ENCODE measurements at regions of chr4 and their contacts with region 1.

Region 1: DNA sequence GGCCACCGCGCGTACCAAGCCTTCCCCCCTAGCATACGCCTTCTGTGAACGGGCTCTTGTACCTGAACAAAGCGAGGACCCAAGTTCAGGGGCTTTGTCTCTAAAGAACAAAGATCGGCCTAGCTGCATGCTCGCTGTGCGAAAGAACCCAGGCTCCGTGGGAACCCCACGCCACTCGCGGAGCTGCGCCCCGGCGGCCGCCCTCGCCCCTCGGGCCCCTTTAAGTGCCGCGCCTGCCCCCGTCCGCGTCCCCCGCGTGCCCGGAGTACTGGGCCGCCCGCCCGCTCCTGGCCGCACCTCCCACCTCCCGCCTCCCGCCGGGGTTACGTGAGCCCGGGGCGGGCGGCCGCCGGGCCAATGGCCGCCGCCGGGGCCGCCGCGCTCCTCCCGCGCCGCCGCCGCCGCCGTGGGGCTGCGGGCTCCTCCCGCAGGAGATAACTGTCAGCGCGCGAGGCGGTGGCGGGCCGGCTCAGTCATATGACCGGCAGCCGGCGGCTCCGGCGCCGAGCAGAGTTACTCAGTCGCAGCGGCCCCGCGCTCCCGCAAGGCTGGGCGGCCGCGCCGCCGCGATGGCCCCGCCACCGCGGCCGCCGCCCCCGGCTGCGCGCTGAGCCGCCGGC is at the start of gene FNIP2:
- DNase-seq: peak; percentile 74 to 91 (median 84)
- H3K4me3 ChIP-seq: peak within 1 kb of the TSS; percentile 67 to 98 (median 90)
- H3K27ac ChIP-seq: peak within 1 kb of the TSS; percentile 71 to 98 (median 95)
- H3K27me3 ChIP-seq: no peaks in the 10 kb centered on the region
- CTCF ChIP-seq: peak in 5 of 56 donors; percentile 5 to 23 (median 12)
- total RNA-seq, gene FNIP2: 38.5 to 72.7 (median 57.8) TPM

Region 2: DNA sequence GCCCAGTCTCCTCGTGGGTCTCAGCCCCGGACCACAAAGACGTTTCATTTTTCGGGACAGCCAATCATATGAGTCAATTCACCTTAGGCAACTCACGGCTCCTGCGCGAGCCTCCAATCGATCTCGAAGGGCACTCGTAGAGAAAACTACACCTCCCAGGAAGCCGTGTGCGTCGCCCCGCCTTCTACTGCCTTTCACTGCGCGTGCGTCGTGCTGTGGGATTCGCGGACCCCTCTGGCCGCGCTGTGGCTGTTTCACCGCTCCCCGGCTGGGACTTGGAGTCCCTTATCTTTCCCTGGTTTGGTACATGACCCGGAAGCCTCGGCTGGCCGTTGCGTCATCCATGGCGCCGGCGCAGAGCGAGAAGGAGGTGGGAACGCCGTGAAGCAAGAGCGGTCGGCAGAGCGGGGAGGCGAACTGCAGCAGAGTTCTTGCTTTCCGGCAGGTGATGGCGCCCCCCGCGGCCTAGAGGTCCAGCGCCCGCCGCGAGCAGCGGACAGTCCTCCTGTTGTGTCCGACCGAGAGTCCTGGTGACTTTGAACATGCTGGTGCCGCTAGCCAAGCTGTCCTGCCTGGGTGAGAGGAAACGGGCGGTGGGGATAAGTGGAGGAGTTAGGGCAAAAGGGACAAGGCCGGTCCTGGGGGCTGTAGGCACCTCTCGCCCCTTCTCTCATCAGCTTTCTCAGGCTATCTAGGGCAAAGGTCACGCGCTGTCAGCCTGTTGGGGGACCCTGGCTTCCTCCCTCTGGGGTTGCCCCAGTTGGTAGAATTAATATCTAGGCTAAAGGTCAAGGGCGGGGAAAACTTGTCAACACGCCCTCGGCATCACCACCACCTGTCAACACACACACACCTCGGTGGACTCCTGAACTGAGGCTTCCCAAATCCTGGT is 96.5 kb before region 1 on chr4 and contains the start of gene ETFDH:
- intact Hi-C with region 1: loop called in 1 of 2 experiments (anchors 5 kb)
- DNase-seq: peak; percentile 96 to 99 (median 98)
- H3K4me3 ChIP-seq: peak within 1 kb of the TSS; percentile 62 to 99 (median 89)
- H3K27ac ChIP-seq: peak within 1 kb of the TSS; percentile 59 to 99 (median 95)
- H3K27me3 ChIP-seq: no peaks in the 10 kb centered on the region
- CTCF ChIP-seq: peak; percentile 51 to 93 (median 80)
- total RNA-seq, gene ETFDH: 22.9 to 50.5 (median 35.3) TPM

Region 3: DNA sequence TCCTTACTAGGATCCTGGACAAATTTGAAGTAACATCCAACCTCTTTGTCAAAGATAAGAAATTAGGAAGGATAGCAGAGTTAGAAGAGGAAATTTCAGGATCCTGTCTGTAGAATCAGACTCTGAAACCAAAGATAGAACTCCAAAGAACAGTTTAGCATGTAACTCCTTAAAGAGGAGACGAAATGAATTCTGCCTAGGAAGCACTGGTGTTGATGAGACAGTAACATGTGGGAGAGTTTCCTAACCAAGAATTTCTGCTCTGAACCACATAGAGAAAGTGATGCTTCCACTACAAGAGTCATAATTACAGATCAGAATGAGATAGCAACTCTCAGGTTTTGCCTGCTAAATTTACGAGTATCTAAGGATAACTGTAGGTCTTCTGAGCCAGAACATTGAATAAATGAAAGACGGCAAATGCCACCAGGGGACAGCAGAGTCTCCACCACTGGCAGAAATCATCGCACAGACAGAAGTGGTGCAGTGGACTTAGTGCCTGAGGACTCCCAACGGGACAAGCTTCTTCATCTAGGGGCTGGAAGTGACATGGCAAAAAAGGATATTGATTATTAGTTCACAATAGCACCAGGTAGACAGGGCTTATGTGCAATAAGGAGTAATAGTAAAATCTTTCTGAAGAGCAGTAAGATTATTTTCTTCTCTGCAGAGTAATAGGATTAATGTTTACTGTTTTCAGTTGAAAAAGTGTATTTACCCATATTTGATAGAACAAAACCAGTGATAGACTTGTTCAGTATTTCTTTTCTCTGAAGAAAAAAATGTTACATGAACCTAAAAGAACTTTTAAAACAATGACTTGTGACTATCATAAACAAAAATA is 38.7 kb before region 1 on chr4:
- intact Hi-C with region 1: loop called (anchors 5 kb)
- DNase-seq: peak; percentile 44 to 87 (median 68)
- H3K4me3 ChIP-seq: peak overlapping the region in 1 of 59 donors; percentile 1
- H3K27ac ChIP-seq: peak overlapping the region in 1 of 59 donors; percentile 28
- H3K27me3 ChIP-seq: no peaks in the 10 kb centered on the region
- CTCF ChIP-seq: peak; percentile 66 to 98 (median 91)

Region 4: GRCh38 chr4:158821228-158821971 is 52.7 kb after region 1 on chr4:
- intact Hi-C with region 1: loop called in 1 of 2 experiments (anchors 10 kb)
- DNase-seq: no peak
- H3K4me3 ChIP-seq: no peak overlapping the region
- H3K27ac ChIP-seq: peak overlapping the region in 35 of 59 donors; percentile 1 to 72 (median 45)
- H3K27me3 ChIP-seq: no peaks in the 10 kb centered on the region
- CTCF ChIP-seq: no peak

Region 5: DNA sequence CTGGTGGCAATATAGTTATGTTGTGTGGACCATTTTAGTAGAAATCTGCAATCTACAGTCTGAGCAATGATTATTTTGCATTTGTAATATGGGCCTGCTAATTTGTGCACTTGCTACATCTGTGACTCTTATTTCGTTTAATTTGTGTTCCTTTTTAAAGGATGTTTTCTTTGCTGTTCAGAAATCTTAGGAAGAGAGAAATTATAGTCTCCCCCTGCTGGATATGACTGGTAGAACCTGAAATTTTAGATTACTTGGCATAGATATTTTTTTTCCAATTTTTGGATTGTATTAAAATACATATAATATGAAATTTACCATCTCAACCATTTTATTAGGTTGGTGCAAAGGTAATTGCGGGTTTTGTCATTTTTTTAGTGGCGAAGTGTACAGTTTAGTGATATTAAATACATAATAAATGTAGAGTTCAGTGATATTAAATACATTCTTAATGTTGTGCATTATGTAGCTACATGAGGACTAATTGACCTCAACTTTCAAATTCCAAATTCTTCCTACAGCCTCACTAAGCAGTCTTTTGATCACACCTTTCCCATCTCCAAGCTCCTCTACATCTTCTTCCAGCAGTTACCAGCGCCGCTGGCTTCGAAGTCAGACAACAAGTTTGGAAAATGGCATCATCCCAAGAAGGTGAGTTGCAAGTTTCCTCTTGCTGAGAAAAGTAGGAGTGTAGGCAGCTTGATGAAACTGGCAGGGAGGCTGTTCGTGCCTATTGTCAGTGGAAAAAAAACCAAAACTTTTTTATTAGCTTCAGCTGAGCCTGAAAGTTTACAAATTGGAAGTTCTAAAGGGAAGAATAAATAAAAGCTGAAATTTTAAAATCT is 82.4 kb after region 1 on chr4:
- intact Hi-C with region 1: loop called (anchors 2 to 5 kb)
- DNase-seq: no peak
- H3K4me3 ChIP-seq: no peak overlapping the region
- H3K27ac ChIP-seq: peak overlapping the region in 48 of 59 donors; percentile 0 to 74 (median 45)
- H3K27me3 ChIP-seq: no peaks in the 10 kb centered on the region
- CTCF ChIP-seq: peak; percentile 65 to 96 (median 84)

Region 6: DNA sequence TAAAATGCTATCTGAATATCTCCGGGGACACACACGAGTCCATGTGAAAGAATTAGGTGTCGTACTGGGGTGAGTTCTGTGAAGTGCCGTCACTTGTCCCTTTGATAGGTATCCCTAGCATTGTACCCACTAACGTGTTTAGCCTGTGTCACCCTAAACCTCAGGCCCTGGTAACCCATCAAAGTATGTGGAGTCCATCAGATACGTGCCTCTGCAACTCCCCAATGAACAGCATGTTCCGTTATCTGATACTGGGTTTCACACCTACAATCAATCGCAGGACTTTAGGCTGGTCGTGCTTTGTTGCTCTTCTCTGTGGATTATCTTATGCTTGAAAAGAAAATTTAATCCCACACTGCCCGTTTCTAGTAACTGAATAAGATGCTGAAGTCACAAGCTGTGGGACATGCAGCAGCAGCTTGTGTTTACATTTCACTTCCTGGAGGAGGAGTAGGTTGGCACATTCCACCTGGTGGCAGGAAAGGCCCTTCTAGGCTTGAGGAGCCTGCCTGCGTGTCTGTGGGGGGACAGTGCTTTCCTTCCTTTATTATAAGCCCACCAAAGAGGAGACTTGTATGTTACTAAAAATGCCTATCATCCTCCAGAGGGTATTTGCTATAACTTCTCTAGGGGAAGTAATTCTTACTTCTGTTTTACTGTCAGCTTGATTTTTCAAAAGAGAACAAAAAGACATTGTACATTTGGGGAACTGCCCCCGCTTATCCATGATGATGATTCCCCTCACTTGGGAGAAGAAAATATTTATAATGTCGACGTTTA is 127.3 kb after region 1 on chr4:
- intact Hi-C with region 1: no loop called
- DNase-seq: peak in 4 of 10 donors; percentile 14 to 58 (median 50)
- H3K4me3 ChIP-seq: no peak overlapping the region
- H3K27ac ChIP-seq: peak overlapping the region in 57 of 59 donors; percentile 1 to 83 (median 63)
- H3K27me3 ChIP-seq: no peaks in the 10 kb centered on the region
- CTCF ChIP-seq: peak in 3 of 56 donors; percentile 6 to 20 (median 18)

Region 7: DNA sequence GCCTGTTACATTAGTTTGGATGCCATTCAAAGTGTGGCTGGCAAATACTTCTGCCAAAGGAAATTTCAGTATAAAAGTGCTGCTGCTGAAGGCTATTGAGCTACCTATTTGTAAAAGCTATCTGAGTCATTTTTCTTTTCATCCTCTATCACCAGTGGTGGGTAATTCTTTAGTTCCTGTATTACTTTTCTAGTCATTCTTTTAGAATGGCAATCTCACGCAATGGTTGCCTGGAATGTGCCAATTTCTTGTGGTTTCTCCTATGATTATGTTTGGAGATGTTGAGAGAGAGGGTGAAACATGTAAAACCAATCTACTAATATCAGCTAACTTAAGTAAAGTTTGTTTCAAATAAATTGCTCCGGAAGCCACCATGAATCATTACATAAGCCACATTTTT is 1019.2 kb after region 1 on chr4:
- intact Hi-C with region 1: no loop called
- DNase-seq: no peak
- H3K4me3 ChIP-seq: no peak overlapping the region
- H3K27ac ChIP-seq: no peak overlapping the region
- H3K27me3 ChIP-seq: peaks cover 0 to 5% (median 0%) of the 10 kb centered on the region in 45 donors
- CTCF ChIP-seq: no peak

Measured in dorsolateral prefrontal cortex (tissue), 120 donors.